Endothelial cell of umbilical vein (primary cell): ENCODE measurements at regions of chr14 and their contacts with region 1.

Region 1: DNA sequence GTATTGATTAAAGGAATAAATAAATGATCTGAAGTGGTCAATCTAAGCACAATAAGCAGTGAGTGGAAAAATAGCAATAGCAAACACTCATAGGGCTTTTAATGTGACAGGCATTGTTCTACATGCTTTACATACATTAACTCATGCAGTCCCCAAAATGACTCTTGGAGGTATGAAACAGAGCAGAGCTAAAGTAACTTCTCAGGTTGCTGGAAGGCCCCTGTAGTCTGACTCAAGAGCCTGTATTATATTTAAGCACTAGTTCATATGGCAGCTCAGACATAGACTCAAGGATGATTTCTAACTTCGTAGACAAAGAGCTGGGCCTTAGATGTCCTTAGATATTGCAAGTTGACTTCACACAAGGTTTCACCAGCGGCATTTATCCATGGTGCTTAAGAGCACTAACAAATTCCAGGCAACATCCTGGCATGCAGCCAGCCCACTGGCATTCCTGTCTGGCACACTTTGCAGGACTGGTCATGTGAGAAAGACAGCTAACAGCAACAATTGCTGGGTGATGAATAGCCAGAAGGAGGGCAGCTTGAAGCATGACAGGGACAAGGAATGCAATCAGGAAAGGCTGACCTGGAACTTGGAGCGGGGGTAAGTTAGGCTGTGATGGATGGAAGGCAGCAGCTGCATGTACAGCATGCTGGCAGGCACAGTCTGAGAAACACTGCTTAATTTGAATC is 22.9 kb upstream of the KTN1 start:
- DNase-seq: peak; percentile 94
- H3K4me3 ChIP-seq: no peak overlapping the region
- H3K27ac ChIP-seq: no peak overlapping the region
- H3K4me1 ChIP-seq: peaks cover 7% of the 10 kb centered on the region
- H3K27me3 ChIP-seq: no peaks in the 10 kb centered on the region
- CTCF ChIP-seq: no peak
- POLR2A ChIP-seq: no peak

Region 2: DNA sequence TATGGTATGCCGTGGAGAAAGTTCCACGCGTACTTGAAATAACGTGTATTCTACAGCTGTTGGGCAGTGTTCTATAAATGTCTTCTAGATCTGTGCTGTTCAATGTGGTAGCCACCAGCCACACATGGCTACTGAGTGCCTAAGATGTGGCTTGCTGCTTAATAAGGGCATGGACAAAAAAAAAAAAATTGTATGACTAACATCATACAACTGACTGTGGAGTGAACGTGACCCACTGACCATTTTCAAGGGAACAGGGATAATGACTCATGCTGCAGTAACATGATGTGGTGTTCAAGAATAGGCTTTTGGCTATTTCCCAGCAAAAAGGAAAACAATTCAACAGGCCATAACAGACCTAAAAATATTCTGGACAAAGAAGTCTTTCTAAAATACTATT is 158.4 kb before region 1 on chr14:
- CTCF ChIA-PET with region 1: no interaction called
- POLR2A ChIA-PET with region 1: no interaction called
- dilution Hi-C with region 1: no loop called
- intact Hi-C with region 1: no loop called
- DNase-seq: peak; percentile 97
- H3K4me3 ChIP-seq: no peak overlapping the region
- H3K27ac ChIP-seq: peak overlapping the region; percentile 74
- H3K4me1 ChIP-seq: peaks cover 18% of the 10 kb centered on the region
- H3K27me3 ChIP-seq: no peaks in the 10 kb centered on the region
- CTCF ChIP-seq: no peak
- POLR2A ChIP-seq: no peak

Region 3: DNA sequence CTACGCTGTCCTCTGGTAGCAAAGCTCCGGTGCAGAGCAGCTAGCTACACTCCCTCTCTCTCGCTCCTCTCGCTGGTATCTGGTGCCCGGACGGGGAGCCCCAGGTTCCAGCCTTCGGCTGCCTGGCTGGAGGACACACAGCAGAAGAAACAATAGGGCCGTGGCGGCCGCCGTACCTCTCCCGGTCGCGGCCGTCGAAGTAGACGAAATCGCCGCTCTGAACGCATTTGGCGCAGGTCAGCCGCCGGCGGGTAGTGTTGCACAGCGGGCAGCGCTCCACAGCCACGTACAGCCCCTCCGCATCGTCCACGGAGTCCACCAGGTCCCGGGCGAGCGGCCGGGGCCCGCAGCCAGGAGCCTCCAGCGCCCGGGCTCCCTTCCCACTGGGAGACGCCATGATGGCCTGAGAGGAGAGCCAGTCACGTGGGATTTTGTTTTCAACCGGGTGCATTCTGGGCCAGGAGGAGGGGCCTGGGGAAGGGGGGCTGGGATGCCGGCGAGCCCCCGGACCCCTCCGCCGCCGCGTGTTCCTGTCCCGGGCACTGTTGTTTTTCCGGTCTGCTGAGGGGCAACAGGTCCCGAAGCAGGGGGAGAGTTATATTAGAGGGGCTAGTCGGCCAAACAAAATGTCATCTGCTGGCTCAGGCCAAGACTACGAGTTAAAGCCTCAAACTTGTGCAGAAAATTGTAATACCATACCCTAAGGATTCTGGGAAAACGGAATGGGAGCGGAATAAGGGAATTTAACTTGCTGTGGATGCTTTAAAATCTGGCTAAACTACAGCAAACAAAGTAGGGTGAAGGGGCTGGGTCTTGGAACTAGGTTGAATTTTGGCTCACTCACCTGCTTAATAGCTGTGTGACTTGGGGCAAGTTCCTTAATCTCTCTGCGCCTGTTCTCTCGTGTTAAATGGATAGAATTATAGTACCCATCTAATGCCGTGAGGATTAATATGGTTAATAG is 145.4 kb before region 1 on chr14 and contains the start of gene ATG14:
- CTCF ChIA-PET with region 1: no interaction called
- POLR2A ChIA-PET with region 1: no interaction called
- dilution Hi-C with region 1: no loop called
- intact Hi-C with region 1: no loop called
- DNase-seq: peak; percentile 90
- H3K4me3 ChIP-seq: peak within 1 kb of the TSS; percentile 77 to 91 (median 85)
- H3K27ac ChIP-seq: peak within 1 kb of the TSS; percentile 60
- H3K4me1 ChIP-seq: peaks cover 15% of the 10 kb centered on the region
- H3K27me3 ChIP-seq: peaks cover 0 to 3% of the 10 kb centered on the region in 2 experiments
- CTCF ChIP-seq: no peak
- POLR2A ChIP-seq: no peak
- total RNA-seq, gene ATG14: 9.6 and 10.0 TPM in 2 replicates

Region 4: GRCh38 chr14:55454264-55455002 is 102.6 kb before region 1 on chr14:
- CTCF ChIA-PET with region 1: interaction called, 3 read pairs
- POLR2A ChIA-PET with region 1: no interaction called
- dilution Hi-C with region 1: no loop called
- intact Hi-C with region 1: loop called (anchors 1 kb)
- DNase-seq: peak; percentile 81
- H3K4me3 ChIP-seq: no peak overlapping the region
- H3K27ac ChIP-seq: no peak overlapping the region
- H3K4me1 ChIP-seq: peaks cover 52% of the 10 kb centered on the region
- H3K27me3 ChIP-seq: no peaks in the 10 kb centered on the region
- CTCF ChIP-seq: no peak
- POLR2A ChIP-seq: no peak

Region 5: DNA sequence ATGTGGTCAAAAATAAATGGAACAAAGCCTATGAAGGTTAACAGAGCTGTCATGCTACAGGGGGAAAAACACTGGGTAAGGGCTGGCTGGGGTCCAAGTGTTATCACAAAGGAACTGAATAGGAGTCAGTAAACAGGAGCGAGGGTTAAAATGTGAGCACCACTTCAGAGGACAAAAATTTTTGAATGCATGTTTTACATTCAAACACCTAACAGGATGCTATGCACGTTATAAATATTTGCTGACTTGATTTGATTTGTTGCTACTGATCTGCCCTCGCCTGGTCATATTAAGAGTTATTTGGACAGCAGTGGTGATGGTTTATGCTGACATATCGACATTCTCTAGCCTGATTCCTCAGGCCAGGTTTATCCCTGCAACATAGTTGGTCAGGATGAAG is 15.5 kb after region 1 on chr14:
- CTCF ChIA-PET with region 1: interaction called, 11 read pairs
- POLR2A ChIA-PET with region 1: no interaction called
- dilution Hi-C with region 1: no loop called
- intact Hi-C with region 1: no loop called
- DNase-seq: peak; percentile 82
- H3K4me3 ChIP-seq: no peak overlapping the region
- H3K27ac ChIP-seq: no peak overlapping the region
- H3K4me1 ChIP-seq: peaks cover 11% of the 10 kb centered on the region
- H3K27me3 ChIP-seq: no peaks in the 10 kb centered on the region
- CTCF ChIP-seq: no peak
- POLR2A ChIP-seq: peak; percentile 30